Transverse colon (tissue), 4 donors: ENCODE measurements at regions of chr10 and their contacts with region 1.

Region 1: GRCh38 chr10:35126530-35127296 is at the start of gene CREM:
- DNase-seq: peak; percentile 100
- H3K4me3 ChIP-seq: peak within 1 kb of the TSS; percentile 67 to 85 (median 76)
- H3K27ac ChIP-seq: peak within 1 kb of the TSS; percentile 98 to 99 (median 98)
- H3K4me1 ChIP-seq: peaks cover 3 to 33% (median 8%) of the 10 kb centered on the region in 4 donors
- H3K27me3 ChIP-seq: no peaks in the 10 kb centered on the region
- CTCF ChIP-seq: peak; percentile 83 to 99 (median 93)
- EP300 ChIP-seq: peak; percentile 52
- POLR2A ChIP-seq: peak; percentile 98
- total RNA-seq, gene CREM: 2.8 to 99.9 (median 21.1) TPM

Region 2: GRCh38 chr10:35172574-35172973 is 45.9 kb after region 1 on chr10:
- in situ Hi-C with region 1: no loop called
- intact Hi-C with region 1: no loop called
- DNase-seq: no peak
- H3K4me3 ChIP-seq: no peak overlapping the region
- H3K27ac ChIP-seq: no peak overlapping the region
- H3K4me1 ChIP-seq: no peaks in the 10 kb centered on the region
- H3K27me3 ChIP-seq: no peaks in the 10 kb centered on the region
- CTCF ChIP-seq: no peak
- EP300 ChIP-seq: no peak
- POLR2A ChIP-seq: no peak

Region 3: DNA sequence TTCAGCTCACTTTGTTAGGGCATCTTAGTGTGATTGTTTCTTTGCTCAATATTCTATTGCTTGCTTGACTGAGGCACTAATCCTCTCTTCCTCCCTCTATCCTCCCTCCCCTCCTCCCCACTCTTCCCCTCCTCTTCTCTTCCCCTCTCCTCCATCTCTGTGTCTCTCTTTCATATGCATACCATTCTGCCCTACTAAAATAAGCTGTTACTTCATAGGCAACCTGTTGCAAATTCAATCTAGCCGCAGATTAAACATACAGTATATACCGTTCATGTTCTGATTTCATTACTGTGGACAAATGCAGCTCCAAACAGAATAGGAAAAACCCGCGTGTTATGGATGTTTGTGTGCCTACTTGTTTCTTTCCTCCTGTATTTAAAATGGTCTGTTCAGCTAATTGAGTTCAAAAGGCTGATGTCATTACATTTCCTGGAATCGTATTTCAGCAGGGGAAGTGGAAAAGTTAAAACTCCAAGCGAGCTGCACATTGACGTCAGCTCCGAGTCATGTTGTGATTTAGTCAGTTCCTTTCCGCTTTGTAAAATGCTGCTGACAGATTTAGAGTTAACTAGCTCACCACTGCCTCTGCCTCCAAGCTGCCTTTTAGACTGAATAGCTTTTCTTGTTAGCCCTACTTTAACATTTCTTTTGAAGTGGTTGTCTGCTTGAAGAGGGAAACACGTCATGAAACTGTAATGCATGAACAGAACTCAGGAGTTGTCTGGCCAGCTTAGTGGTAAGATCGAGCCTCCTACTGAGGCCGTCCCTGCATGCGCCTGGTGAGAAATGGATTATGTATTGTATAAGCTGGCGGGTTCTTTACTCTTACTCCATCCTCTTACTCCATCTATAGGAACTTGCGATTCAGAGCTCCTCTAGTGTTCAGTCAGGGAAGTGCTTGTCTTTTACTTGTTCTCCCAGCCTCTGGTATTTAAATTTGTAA is 68.9 kb after region 1 on chr10:
- in situ Hi-C with region 1: no loop called
- intact Hi-C with region 1: loop called (anchors 2 kb)
- DNase-seq: peak; percentile 78
- H3K4me3 ChIP-seq: peak overlapping the region; percentile 15 to 52 (median 33)
- H3K27ac ChIP-seq: peak overlapping the region; percentile 92 to 95 (median 93)
- H3K4me1 ChIP-seq: peaks cover 0 to 8% (median 6%) of the 10 kb centered on the region in 4 donors
- H3K27me3 ChIP-seq: no peaks in the 10 kb centered on the region
- CTCF ChIP-seq: peak; percentile 88 to 98 (median 92)
- EP300 ChIP-seq: peak; percentile 81
- POLR2A ChIP-seq: peak; percentile 46

Region 4: DNA sequence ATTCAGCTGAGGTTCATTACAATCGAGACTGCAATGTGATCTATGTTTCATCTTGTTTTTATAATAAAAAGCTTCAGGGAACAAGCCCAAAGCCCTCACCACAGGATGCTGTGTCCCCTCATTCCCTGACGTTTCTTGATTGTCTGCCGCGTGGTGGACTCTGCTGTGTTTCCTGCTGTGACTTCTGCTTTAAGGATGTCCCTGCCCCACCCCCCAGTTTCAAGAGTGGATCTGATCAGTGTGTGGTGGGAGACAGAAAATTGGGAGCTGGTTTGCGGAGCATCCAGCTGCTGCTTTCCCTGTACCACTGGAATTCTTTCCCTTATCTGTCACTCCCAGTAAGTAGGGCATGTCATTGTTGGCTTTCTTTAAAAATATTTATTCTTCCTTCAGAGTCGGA is 86.1 kb after region 1 on chr10:
- in situ Hi-C with region 1: loop called (anchors 5 to 10 kb)
- intact Hi-C with region 1: no loop called
- DNase-seq: peak; percentile 27
- H3K4me3 ChIP-seq: no peak overlapping the region
- H3K27ac ChIP-seq: no peak overlapping the region
- H3K4me1 ChIP-seq: peaks cover 0 to 12% (median 0%) of the 10 kb centered on the region in 4 donors
- H3K27me3 ChIP-seq: no peaks in the 10 kb centered on the region
- CTCF ChIP-seq: no peak
- EP300 ChIP-seq: no peak
- POLR2A ChIP-seq: no peak

Region 5: GRCh38 chr10:35218339-35218955 is 91.7 kb after region 1 on chr10:
- in situ Hi-C with region 1: loop called (anchors 5 to 10 kb)
- intact Hi-C with region 1: no loop called
- DNase-seq: peak; percentile 83
- H3K4me3 ChIP-seq: no peak overlapping the region
- H3K27ac ChIP-seq: peak overlapping the region in 3 of 4 donors; percentile 2 to 33 (median 27)
- H3K4me1 ChIP-seq: peaks cover 0 to 22% (median 0%) of the 10 kb centered on the region in 4 donors
- H3K27me3 ChIP-seq: no peaks in the 10 kb centered on the region
- CTCF ChIP-seq: peak; percentile 80 to 85 (median 82)
- EP300 ChIP-seq: no peak
- POLR2A ChIP-seq: no peak